Activated CD4-positive, alpha-beta T cell treated with anti-CD3 and anti-CD28 coated beads for 36 hours (primary cell): ENCODE measurements at regions of chr9 and their contacts with region 1.

Region 1: DNA sequence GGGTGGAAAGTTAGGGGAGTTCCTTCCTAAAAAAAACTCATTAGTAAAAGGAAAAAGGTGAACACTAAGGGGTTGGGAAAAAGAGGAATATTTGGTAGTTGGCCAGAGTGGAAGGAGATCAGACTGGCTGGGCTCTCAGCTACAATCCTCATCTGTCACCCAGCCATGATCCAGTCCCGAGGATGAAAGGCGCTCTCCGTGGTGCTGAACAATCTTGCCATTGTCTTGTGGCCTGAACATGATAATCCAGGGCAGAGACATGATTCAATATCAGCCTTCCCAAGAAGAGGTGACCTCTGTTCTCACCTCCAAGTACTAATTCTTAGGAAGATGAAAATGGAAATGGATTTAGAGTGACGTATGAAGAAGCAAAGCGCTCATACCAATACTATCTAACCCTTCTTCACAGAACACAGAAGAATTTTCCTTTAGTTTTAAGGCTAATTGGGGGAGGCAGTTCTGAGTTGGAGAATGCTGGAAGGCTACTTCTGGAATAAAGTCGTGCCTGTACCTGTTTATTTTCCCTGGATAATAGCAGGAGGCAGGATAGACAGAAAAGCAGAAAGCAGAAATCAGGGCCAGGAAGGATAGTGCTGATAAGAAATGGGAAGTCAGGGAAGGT is 36.6 kb upstream of the MYORG start:
- DNase-seq: peak; percentile 72
- ATAC-seq: peak; percentile 53
- H3K4me3 Mint-ChIP-seq: no peak overlapping the region
- H3K27ac Mint-ChIP-seq: no peak overlapping the region
- H3K4me1 Mint-ChIP-seq: no peaks in the 10 kb centered on the region
- H3K27me3 Mint-ChIP-seq: no peaks in the 10 kb centered on the region

Region 2: GRCh38 chr9:33942471-33943083 is 470.8 kb before region 1 on chr9:
- CTCF ChIA-PET with region 1: no interaction called
- POLR2A ChIA-PET with region 1: no interaction called
- intact Hi-C with region 1: no loop called
- DNase-seq: no peak
- ATAC-seq: no peak
- H3K4me3 Mint-ChIP-seq: no peak overlapping the region
- H3K27ac Mint-ChIP-seq: peak overlapping the region; percentile 47
- H3K4me1 Mint-ChIP-seq: no peaks in the 10 kb centered on the region
- H3K27me3 Mint-ChIP-seq: no peaks in the 10 kb centered on the region

Region 3: GRCh38 chr9:34271265-34272006 is 141.9 kb before region 1 on chr9:
- CTCF ChIA-PET with region 1: no interaction called
- POLR2A ChIA-PET with region 1: no interaction called
- intact Hi-C with region 1: no loop called
- DNase-seq: no peak
- ATAC-seq: no peak
- H3K4me3 Mint-ChIP-seq: no peak overlapping the region
- H3K27ac Mint-ChIP-seq: no peak overlapping the region
- H3K4me1 Mint-ChIP-seq: no peaks in the 10 kb centered on the region
- H3K27me3 Mint-ChIP-seq: no peaks in the 10 kb centered on the region

Region 4: DNA sequence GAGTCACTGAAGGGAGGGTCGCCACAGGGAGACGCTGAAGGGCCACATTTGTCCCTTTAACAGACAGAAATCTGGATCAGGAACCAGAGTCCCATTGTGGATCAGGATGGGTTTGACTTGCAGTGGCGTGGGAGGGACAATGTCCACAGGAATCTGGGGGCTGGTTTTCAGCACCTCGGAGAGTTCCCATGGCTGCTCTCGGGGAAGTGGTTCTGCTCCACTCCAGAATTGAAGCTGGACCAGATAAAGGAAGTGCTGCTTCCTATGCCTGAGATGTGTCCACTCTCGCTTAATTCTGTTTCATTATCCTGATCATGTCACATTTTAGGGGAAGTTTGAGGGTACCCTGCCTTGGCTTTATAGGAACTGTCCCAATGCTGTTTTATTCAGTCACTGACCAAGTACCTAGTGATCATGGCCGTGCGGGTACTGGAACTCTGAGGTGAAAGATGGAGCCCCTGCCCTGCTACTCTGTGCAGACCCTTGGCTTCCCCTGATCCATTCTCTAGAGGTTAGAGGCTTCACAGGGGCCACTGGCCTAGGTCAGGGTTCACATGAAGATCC is 80.7 kb after region 1 on chr9:
- CTCF ChIA-PET with region 1: no interaction called
- POLR2A ChIA-PET with region 1: no interaction called
- intact Hi-C with region 1: loop called in 1 of 2 experiments (anchors 5 kb)
- DNase-seq: peak; percentile 62
- ATAC-seq: no peak
- H3K4me3 Mint-ChIP-seq: no peak overlapping the region
- H3K27ac Mint-ChIP-seq: no peak overlapping the region
- H3K4me1 Mint-ChIP-seq: no peaks in the 10 kb centered on the region
- H3K27me3 Mint-ChIP-seq: peaks cover 20% of the 10 kb centered on the region

Region 5: GRCh38 chr9:34620061-34620994 is 207.0 kb after region 1 on chr9 and contains the start of gene DCTN3:
- CTCF ChIA-PET with region 1: no interaction called
- POLR2A ChIA-PET with region 1: no interaction called
- intact Hi-C with region 1: no loop called
- DNase-seq: peak; percentile 95
- ATAC-seq: peak; percentile 99
- H3K4me3 Mint-ChIP-seq: peak within 1 kb of the TSS; percentile 88
- H3K27ac Mint-ChIP-seq: peak within 1 kb of the TSS; percentile 77
- H3K4me1 Mint-ChIP-seq: peaks cover 25% of the 10 kb centered on the region
- H3K27me3 Mint-ChIP-seq: peaks cover 25% of the 10 kb centered on the region
- total RNA-seq, gene DCTN3: 65.9 to 68.4 TPM